ENCODE measurements at regions of chr17 and their contacts with region 1.

Region 1: GRCh38 chr17:77153472-77153871 is 12.7 kb downstream of the SEC14L1 start:
- DNase-seq: no peak
- ATAC-seq: no peak
- H3K4me3 ChIP-seq: peak overlapping the region in 1 of 12 donors; percentile 2
- H3K27ac ChIP-seq: peak overlapping the region in 7 of 12 donors; percentile 28 to 87 (median 40)
- H3K4me1 ChIP-seq: peaks cover 4 to 88% (median 56%) of the 10 kb centered on the region in 12 donors
- H3K27me3 ChIP-seq: no peaks in the 10 kb centered on the region
- CTCF ChIP-seq: no peak
- POLR2A ChIP-seq: no peak

Region 2: DNA sequence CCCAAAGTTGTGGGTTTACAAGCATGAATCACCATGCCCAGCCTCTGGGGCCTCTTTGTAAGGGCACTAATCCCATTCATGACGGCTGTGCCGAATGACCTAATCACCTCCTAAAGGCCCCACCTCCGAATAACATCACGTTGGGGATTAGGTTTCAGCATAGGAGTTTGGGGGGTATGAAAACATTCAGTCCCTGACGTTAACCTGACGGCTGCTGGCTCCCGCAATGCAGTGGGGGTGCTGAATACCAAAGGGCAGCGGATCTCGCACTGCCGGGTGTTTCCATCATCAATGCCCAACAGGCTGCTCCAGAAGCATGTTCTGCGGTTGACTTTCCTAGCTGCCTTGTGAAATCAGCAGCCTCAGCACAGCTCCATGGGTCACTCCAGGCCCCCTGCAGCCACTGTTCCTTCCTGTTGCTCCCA is 133.5 kb before region 1 on chr17:
- intact Hi-C with region 1: no loop called
- DNase-seq: no peak
- ATAC-seq: no peak
- H3K4me3 ChIP-seq: no peak overlapping the region
- H3K27ac ChIP-seq: no peak overlapping the region
- H3K4me1 ChIP-seq: no peaks in the 10 kb centered on the region
- H3K27me3 ChIP-seq: peaks cover 0 to 3% (median 0%) of the 10 kb centered on the region in 9 donors
- CTCF ChIP-seq: no peak
- POLR2A ChIP-seq: no peak

Region 3: GRCh38 chr17:77186141-77186604 is 32.7 kb after region 1 on chr17:
- intact Hi-C with region 1: loop called in 5 of 10 experiments (anchors 5 kb)
- DNase-seq: peak in 3 of 5 donors; percentile 26 to 58 (median 44)
- ATAC-seq: peak; percentile 67 to 85 (median 76)
- H3K4me3 ChIP-seq: no peak overlapping the region
- H3K27ac ChIP-seq: peak overlapping the region in 11 of 12 donors; percentile 20 to 66 (median 44)
- H3K4me1 ChIP-seq: peaks cover 13 to 87% (median 71%) of the 10 kb centered on the region in 12 donors
- H3K27me3 ChIP-seq: no peaks in the 10 kb centered on the region
- CTCF ChIP-seq: no peak
- POLR2A ChIP-seq: no peak

Region 4: DNA sequence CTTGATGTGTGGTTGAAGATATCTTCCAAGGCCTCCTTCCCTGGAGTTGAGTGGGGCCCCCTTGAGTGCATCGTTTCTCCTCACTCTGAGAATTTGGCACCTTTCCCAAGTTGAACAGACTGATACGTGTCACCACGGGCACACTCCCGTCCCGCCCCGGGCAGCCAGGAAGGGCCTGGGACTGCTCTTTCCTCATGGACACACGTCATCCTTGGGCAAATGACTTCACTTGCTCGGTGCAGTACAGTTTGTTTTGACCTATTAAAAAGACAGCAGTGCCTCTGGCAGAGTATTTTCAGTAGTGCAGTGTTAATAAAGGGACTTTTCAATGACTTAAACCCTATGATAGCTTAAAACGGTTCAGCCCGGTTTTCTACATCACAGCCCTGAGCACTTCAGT is 47.2 kb after region 1 on chr17:
- intact Hi-C with region 1: loop called in 7 of 10 experiments (anchors 5 to 10 kb)
- DNase-seq: peak in 1 of 5 donors; percentile 55
- ATAC-seq: peak; percentile 38 to 91 (median 74)
- H3K4me3 ChIP-seq: no peak overlapping the region
- H3K27ac ChIP-seq: peak overlapping the region in 6 of 12 donors; percentile 13 to 69 (median 38)
- H3K4me1 ChIP-seq: peaks cover 0 to 8% (median 1%) of the 10 kb centered on the region in 12 donors
- H3K27me3 ChIP-seq: no peaks in the 10 kb centered on the region
- CTCF ChIP-seq: peak in 2 of 12 donors; percentile 10 to 23
- POLR2A ChIP-seq: no peak

Measured in heart left ventricle (tissue), 16 donors.